ENCODE measurements at regions of chr5 and their contacts with region 1.

Region 1: DNA sequence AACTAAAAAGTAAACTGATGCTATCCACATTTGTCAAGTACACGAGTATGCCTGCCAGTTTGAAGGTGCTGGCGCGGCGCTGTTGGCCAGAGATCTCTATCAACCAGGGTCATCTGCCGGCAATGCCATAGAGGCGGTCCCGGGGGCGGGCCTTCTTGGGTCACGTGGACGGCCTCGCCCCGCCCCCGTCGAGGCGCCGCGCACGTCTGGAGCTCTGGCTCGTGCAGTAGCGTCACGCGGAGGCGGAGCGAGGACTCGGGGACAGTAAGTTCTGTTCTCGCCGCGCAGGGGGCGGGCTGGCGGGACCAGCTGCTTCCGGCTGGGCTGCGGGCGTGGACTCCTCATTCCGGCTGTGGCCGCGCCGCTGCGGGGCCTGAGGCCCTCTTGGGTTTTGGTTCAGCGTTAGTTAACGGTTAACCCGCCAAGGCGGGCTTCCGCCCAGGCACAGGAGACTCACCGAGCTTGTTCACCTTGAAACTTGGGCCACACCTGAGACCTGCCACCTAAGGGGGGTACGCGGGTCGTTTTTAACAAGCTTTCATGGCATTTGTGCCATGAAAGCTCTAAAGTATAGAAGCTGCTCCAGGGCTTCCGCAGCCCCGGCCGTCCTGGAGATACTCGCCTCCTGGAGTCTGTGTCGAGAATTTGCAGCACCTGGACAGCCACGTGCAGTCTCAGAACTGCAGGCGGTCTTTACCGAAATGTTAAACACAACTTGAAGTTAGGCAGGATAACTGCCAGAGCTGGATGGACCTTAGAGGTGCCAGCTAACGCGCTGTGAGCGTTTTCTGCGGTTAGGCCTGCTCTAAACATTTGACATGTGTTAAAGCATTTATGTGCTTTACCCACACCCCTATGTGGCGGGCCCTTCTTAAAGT is at the start of gene RFESD:
- DNase-seq: peak; percentile 99
- H3K4me3 ChIP-seq: peak within 1 kb of the TSS; percentile 51
- H3K27ac ChIP-seq: peak within 1 kb of the TSS; percentile 91
- H3K4me1 ChIP-seq: no peaks in the 10 kb centered on the region
- H3K27me3 ChIP-seq: no peaks in the 10 kb centered on the region
- CTCF ChIP-seq: peak; percentile 19
- total RNA-seq, gene RFESD: 0.89 to 2.0 TPM

Region 2: GRCh38 chr5:95352691-95353090 is 294.1 kb before region 1 on chr5:
- intact Hi-C with region 1: no loop called
- DNase-seq: no peak
- H3K4me3 ChIP-seq: no peak overlapping the region
- H3K27ac ChIP-seq: no peak overlapping the region
- H3K4me1 ChIP-seq: no peaks in the 10 kb centered on the region
- H3K27me3 ChIP-seq: no peaks in the 10 kb centered on the region
- CTCF ChIP-seq: no peak

Region 3: GRCh38 chr5:95846554-95847260 is 199.9 kb after region 1 on chr5:
- intact Hi-C with region 1: loop called (anchors 5 kb)
- DNase-seq: peak; percentile 80
- H3K4me3 ChIP-seq: no peak overlapping the region
- H3K27ac ChIP-seq: no peak overlapping the region
- H3K4me1 ChIP-seq: peaks cover 7% of the 10 kb centered on the region
- H3K27me3 ChIP-seq: no peaks in the 10 kb centered on the region
- CTCF ChIP-seq: peak; percentile 92